Caki2 (cell line): ENCODE measurements at regions of chr2 and their contacts with region 1.

Region 1: GRCh38 chr2:26764078-26764887 is at the start of gene SLC35F6:
- DNase-seq: peak; percentile 83
- total RNA-seq, gene SLC35F6: 59.5 and 61.8 TPM in 2 replicates

Region 2: DNA sequence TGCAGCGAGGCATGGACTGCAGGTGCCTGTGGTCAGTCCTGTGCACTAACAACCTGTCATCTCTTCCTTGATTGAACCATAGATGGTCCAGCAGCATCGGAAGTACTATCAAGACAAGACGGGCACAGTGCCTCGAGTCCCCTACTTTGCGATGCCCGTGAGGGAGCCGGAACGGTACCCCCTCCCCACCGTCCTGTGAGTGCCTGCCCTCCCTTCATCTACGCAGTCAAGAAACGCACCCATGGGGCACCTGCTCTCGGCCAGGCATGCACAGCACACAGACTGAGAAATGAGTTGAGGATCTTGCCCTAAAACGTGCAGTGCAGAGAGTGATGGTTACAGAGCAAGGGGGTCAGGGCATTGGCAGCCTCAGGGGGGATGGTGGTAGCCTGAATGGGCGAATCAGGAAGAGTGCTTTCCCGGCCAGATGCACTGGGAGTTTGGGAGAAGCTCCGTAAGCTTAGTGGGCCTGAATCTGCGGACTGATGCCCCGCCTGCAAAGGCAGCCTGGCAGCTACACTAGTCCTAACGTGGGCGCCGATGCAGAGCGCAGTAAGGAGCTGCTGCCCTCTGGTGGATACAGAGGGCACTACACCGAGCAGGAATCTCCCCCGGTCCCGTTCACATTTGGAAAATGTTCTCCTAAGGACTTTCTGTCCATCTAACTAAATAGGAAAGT is 186.7 kb before region 1 on chr2:
- in situ Hi-C with region 1: loop called (anchors 25 kb)
- DNase-seq: peak; percentile 52

Region 3: GRCh38 chr2:26942543-26943295 is 178.4 kb after region 1 on chr2:
- in situ Hi-C with region 1: no loop called
- DNase-seq: peak; percentile 38